Dendritic cell treated with granulocyte-macrophage colony-stimulating factor and Interleukin-4, amounts not matched to agents 40 ng/mL and 50 ng/mL, for 4 days (primary cell): ENCODE measurements at regions of chr16 and their contacts with region 1.

Region 1: DNA sequence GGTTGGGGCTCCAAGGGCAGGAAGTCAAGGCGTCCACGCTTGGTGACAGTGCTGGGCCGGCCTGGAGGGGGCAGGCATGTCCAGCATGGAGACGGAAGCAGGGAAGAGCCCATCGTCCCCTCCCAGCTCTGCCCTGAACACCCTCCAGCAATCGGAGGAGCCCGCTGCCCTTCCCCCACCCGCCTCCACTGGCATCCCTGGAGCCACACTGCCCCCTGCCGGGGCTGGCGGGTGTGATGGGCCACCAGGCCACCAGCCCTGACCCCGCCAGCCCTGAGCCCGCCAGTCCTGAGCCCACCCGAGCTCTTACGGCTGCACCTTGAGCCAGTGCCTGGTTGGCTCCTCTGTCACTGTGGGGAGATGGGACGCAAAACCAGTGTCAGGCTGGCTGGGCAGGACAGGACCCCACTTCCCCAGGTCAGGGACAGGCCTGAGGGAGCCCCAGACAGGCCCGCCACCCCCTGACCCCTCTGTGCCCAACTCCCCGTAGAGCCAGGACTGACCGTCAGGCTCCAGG is 4.1 kb upstream of the CDH15 start:
- H3K4me3 Mint-ChIP-seq: no peak overlapping the region
- H3K27ac Mint-ChIP-seq: no peak overlapping the region
- H3K4me1 Mint-ChIP-seq: peaks cover 25% of the 10 kb centered on the region
- H3K27me3 Mint-ChIP-seq: peaks cover 63% of the 10 kb centered on the region

Region 2: GRCh38 chr16:88737298-88738150 is 430.0 kb before region 1 on chr16:
- intact Hi-C with region 1: loop called (anchors 5 kb)
- H3K4me3 Mint-ChIP-seq: no peak overlapping the region
- H3K27ac Mint-ChIP-seq: no peak overlapping the region
- H3K4me1 Mint-ChIP-seq: peaks cover 5% of the 10 kb centered on the region
- H3K27me3 Mint-ChIP-seq: no peaks in the 10 kb centered on the region

Region 3: DNA sequence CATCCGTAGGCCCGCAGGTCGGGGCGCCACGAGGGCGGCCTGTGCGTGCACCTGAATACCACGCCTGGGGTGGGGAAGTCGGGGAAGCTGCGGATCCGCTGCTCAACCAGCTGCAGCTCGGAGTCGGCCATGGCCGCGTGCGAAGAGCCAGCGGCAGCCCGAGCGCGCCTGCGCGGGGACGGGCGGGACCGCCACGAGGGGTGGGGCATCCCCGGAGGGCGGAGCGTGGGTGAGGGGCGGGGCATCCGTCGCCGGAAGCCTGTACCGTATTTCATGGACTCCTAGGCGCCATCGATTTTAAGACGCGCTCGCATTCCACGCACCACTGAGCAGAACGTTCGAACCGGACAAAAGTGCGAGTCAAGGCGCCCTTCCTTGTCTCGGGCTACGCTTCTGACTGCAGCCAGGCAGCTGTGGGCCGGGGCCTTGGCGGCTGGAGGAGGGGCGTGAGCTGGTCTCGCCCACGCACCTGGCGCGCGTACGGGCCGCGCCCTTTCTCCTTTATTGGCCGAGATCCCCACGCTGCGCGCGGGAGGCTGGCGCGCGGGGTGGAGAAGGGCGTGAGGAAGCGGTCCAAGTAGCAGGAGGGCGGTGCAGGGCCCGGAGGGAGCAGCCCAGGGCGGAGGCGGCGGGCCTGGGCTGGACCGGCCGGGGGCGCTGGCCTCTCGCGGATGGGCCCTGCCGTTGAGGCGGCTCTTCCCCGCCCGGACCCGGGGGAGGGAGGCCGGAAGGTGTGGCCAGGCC is 355.5 kb before region 1 on chr16 and contains the start of gene APRT:
- intact Hi-C with region 1: loop called (anchors 5 kb)
- H3K4me3 Mint-ChIP-seq: peak within 1 kb of the TSS; percentile 80
- H3K27ac Mint-ChIP-seq: peak within 1 kb of the TSS; percentile 88
- H3K4me1 Mint-ChIP-seq: peaks cover 51% of the 10 kb centered on the region
- H3K27me3 Mint-ChIP-seq: no peaks in the 10 kb centered on the region

Region 4: DNA sequence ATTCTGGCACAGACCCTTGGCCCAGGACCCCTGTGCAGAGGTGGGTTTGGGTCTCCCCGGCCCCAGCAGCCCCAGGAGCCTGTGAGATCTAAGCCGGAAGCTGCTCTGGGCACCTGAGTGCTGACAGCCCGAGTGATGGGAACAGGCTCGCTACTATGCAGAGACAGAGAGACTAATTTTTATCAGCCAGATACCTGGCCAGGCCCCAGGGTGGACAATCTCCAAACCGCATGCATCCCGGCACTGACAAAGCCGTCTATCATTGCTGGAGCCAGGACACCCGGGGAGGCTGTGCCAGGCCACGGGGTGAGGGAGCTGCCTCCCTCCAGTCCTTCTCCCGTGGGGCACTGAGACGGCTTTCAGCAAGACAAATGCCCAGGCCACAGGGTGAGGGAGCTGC is 215.5 kb before region 1 on chr16:
- intact Hi-C with region 1: no loop called
- H3K4me3 Mint-ChIP-seq: no peak overlapping the region
- H3K27ac Mint-ChIP-seq: peak overlapping the region; percentile 9
- H3K4me1 Mint-ChIP-seq: peaks cover 34% of the 10 kb centered on the region
- H3K27me3 Mint-ChIP-seq: peaks cover 20% of the 10 kb centered on the region

Region 5: DNA sequence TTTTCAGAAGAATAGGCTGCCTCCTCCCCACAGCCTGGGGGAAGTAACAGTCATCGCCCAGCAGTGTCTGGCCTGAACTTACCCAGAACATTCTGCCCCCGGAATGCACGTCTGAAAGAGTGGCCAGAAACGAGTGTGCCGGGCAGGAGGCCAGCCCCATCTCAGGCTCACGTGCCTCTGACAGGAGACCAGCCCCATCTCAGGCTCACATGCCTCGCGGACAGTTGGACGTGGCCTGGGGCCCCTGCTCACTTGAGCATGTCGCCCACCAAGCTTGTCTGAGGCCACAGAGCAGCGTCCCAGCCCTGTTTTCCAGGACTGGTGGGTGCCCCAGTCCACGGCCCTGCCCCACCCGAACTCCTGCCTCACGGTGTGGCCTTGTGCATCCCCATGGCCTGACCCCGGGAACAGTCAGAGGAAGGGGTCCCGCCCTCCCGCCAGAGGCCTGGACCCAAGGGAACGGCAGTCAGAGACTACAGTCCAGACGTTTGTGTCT is 12.3 kb before region 1 on chr16:
- intact Hi-C with region 1: no loop called
- H3K4me3 Mint-ChIP-seq: no peak overlapping the region
- H3K27ac Mint-ChIP-seq: no peak overlapping the region
- H3K4me1 Mint-ChIP-seq: peaks cover 31% of the 10 kb centered on the region
- H3K27me3 Mint-ChIP-seq: peaks cover 40% of the 10 kb centered on the region

Region 6: DNA sequence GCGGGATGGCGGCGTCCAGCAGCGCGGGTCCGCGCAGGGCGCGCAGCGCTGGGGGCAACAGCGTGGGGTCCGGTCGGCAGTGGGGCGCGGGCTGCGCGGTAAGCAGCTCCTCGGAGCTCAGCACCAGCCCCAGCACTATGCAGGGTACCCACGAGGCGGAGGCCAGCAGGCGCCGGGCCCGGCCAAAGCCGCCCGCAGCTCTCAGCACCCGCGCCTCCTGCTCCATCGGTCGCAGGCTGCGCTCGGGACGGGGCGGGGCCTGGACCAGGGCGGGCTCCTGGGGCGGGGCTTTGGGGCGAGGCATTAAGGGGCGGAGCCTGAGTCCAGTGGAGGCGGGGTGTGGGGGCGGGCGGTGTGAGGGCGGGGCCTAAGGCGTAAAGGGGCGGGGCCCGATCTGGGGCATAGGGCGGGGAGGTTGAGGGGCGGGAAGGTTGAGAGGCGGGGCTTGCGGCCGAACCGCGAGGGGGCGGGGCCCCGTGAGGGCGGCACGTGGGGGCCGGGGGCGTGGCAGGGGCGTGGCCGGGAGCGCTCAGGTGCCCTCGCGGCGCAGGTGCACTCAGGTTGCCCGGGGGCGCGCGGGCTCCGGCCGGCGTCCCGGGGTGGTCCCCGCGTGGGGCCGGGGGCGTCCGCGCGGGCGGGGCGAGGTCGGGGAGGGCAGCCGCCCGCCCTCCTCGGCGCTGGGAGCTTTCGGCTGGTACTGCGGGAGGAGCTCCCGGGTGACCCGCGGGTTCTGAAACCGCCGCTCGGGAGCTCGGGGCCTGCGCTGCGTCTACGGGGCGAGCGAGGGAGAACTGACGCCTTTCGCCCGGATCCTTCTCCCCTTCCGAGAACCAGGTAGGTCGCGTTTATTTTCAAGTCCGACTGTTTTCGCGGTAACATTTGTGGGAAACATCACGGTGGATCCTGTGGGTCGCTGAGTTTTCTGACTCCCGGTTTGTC is 34.2 kb after region 1 on chr16:
- intact Hi-C with region 1: no loop called
- H3K4me3 Mint-ChIP-seq: peak overlapping the region; percentile 39
- H3K27ac Mint-ChIP-seq: no peak overlapping the region
- H3K4me1 Mint-ChIP-seq: peaks cover 15% of the 10 kb centered on the region
- H3K27me3 Mint-ChIP-seq: peaks cover 68% of the 10 kb centered on the region